RWPE1 (cell line): ENCODE measurements at regions of chr4 and their contacts with region 1.

Region 1: DNA sequence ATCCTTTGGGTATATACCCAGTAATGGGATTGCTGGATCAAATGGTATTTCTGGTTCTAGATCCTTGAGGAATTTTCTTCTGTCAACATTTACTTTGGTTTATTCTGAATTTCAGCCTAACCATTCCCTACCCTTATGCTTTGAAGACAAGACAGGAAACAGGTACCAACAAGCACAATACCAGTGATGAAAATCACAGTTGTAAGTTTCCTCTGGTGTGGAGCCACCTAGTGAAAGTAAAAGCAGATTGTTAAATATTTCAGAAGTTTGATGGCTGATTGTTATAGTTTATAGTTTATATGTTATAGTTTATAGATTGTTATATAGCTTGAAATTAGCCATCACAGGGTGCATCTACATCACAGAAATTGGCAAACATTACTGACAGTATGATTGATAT is 104.5 kb upstream of the AGA start:
- DNase-seq: peak; percentile 20
- H3K27ac ChIP-seq: no peak overlapping the region
- CTCF ChIP-seq: no peak

Region 2: GRCh38 chr4:177673985-177674489 is 127.3 kb after region 1 on chr4:
- CTCF ChIA-PET with region 1: no interaction called
- POLR2A ChIA-PET with region 1: no interaction called
- DNase-seq: no peak
- H3K27ac ChIP-seq: no peak overlapping the region
- CTCF ChIP-seq: no peak

Region 3: GRCh38 chr4:178275671-178276360 is 729.1 kb after region 1 on chr4:
- CTCF ChIA-PET with region 1: interaction called, 12 read pairs
- POLR2A ChIA-PET with region 1: no interaction called
- DNase-seq: no peak
- H3K27ac ChIP-seq: no peak overlapping the region
- CTCF ChIP-seq: no peak